ENCODE measurements at regions of chr2 and their contacts with region 1.

Region 1: GRCh38 chr2:98822301-98823164 is 91.6 kb upstream of the MGAT4A start:
- DNase-seq: peak; percentile 48 to 58 (median 53)
- H3K4me3 ChIP-seq: peak overlapping the region; percentile 52 to 72 (median 53)
- H3K4me3 Mint-ChIP-seq: peak overlapping the region; percentile 63 to 69
- H3K27ac ChIP-seq: peak overlapping the region; percentile 12 to 28
- H3K27ac Mint-ChIP-seq: peak overlapping the region in 1 of 7 donors; percentile 32
- H3K4me1 ChIP-seq: peaks cover 33 to 42% of the 10 kb centered on the region in 2 donors
- H3K4me1 Mint-ChIP-seq: peaks cover 46% of the 10 kb centered on the region
- H3K27me3 ChIP-seq: no peaks in the 10 kb centered on the region
- H3K27me3 Mint-ChIP-seq: peaks cover 2 to 5% (median 4%) of the 10 kb centered on the region in 3 donors
- CTCF ChIP-seq: peak; percentile 66

Region 2: GRCh38 chr2:98731041-98731893 is 91.3 kb before region 1 on chr2 and contains the start of gene MGAT4A:
- intact Hi-C with region 1: loop called (anchors 5 to 10 kb)
- DNase-seq: peak; percentile 46 to 65 (median 57)
- H3K4me3 ChIP-seq: peak within 1 kb of the TSS; percentile 46 to 78 (median 62)
- H3K4me3 Mint-ChIP-seq: peak within 1 kb of the TSS; percentile 80 to 90
- H3K27ac ChIP-seq: peak within 1 kb of the TSS in 1 of 2 donors; percentile 84
- H3K27ac Mint-ChIP-seq: peak within 1 kb of the TSS; percentile 75 to 89 (median 86)
- H3K4me1 ChIP-seq: peaks cover 38 to 49% of the 10 kb centered on the region in 2 donors
- H3K4me1 Mint-ChIP-seq: peaks cover 51% of the 10 kb centered on the region
- H3K27me3 ChIP-seq: no peaks in the 10 kb centered on the region
- H3K27me3 Mint-ChIP-seq: peaks cover 0 to 4% (median 3%) of the 10 kb centered on the region in 3 donors
- CTCF ChIP-seq: no peak
- polyA plus RNA-seq, gene MGAT4A: 24.3 to 35.9 (median 35.1) TPM

Region 3: GRCh38 chr2:98944775-98945174 is 122.2 kb after region 1 on chr2:
- intact Hi-C with region 1: no loop called
- DNase-seq: no peak
- H3K4me3 ChIP-seq: no peak overlapping the region
- H3K4me3 Mint-ChIP-seq: no peak overlapping the region
- H3K27ac ChIP-seq: no peak overlapping the region
- H3K27ac Mint-ChIP-seq: no peak overlapping the region
- H3K4me1 ChIP-seq: no peaks in the 10 kb centered on the region
- H3K4me1 Mint-ChIP-seq: no peaks in the 10 kb centered on the region
- H3K27me3 ChIP-seq: no peaks in the 10 kb centered on the region
- H3K27me3 Mint-ChIP-seq: peaks cover 5 to 19% (median 9%) of the 10 kb centered on the region in 3 donors
- CTCF ChIP-seq: no peak

Measured in CD14-positive monocyte (primary cell).